GM12878 (cell line): ENCODE measurements at regions of chr14 and their contacts with region 1.

Region 1: DNA sequence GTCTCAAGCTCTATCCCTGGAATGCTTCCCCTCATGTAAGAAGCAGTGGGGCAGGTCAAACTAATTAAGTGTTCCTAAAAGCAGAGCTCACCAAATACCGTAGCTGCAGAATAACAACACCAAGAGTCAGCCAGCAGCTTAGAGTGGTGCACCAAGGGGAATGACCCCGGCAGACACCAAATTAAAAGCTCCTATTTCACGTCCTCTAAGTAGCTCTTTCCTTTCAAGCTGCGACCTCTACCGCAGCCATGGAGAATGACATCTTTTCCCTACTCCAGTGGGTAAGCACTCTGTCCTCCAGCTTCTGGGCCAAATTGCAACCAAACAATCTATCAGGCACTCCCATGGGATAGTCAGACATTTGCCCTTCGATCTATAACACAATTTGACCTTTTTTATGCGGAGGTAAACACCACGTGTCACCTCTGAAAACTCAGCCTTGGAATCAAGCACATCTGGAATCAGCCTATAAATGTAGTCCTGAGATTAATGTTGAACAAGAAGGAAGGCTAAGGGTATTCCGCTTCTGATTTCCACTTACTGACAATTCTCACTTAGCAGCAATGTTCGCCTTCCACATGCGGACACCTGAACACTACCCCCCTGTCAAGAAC is 67.6 kb upstream of the CDKN3 start:
- DNase-seq: no peak
- ATAC-seq: peak; percentile 86
- H3K4me3 ChIP-seq: no peak overlapping the region
- H3K27ac ChIP-seq: no peak overlapping the region
- H3K4me1 ChIP-seq: no peaks in the 10 kb centered on the region
- H3K27me3 ChIP-seq: no peaks in the 10 kb centered on the region; a peak in 1 of 4 replicates
- CTCF ChIP-seq: peak; percentile 75 to 86 (median 79)
- EP300 ChIP-seq: no peak
- POLR2A ChIP-seq: no peak
- RAD21 ChIP-seq: peak; percentile 87

Region 2: GRCh38 chr14:53432378-53432802 is 896.8 kb before region 1 on chr14:
- CTCF ChIA-PET with region 1: interaction called, 12 read pairs
- POLR2A ChIA-PET with region 1: no interaction called
- RAD21 ChIA-PET with region 1: interaction called, 4 read pairs
- SMC1A ChIA-PET with region 1: no interaction called
- in situ Hi-C with region 1: no loop called
- intact Hi-C with region 1: loop called (anchors 2 kb)
- DNase-seq: no peak
- ATAC-seq: peak; percentile 87
- H3K4me3 ChIP-seq: no peak overlapping the region
- H3K27ac ChIP-seq: no peak overlapping the region
- H3K4me1 ChIP-seq: no peaks in the 10 kb centered on the region
- H3K27me3 ChIP-seq: no peaks in the 10 kb centered on the region
- CTCF ChIP-seq: peak; percentile 63 to 70 (median 70)
- EP300 ChIP-seq: no peak
- POLR2A ChIP-seq: no peak
- RAD21 ChIP-seq: peak; percentile 87

Region 3: DNA sequence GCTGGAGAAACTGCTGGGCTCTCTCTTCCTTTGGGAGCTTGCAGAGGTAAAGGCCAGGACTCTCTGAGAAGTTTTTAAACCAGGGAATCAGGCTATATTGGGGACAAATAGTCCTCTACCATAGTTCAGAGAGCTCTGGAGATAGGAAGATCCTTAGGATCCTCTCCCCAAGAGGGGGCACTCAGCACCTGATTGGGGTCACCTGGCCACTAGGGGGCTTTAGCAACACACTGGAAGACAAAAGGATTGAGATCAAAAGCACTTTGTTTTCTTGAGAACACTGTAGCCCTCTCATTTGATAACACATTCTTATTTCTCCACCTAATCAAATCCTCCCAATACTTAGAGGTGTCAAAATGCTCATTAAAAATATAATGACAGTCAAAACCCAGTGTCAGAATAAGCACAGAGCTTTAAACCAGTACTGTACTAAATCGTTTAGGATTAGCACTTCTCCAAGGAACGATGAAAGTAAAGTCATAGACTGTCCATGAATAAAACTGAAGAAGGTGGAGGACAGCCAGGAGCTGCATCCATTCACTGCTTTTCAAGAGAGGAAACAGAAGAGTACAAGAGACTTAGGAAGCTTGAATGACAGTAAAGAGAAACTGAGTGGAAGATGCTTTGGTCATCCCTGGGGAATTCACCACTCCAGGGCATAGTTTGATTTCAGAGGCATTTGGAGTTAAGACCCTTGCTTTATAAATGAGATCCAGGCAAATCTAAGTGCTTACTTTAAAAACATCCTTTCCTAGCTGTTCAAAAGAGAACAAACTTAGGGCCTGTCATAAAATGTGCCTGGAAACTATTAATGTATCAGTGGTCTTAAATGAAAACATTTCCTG is 399.1 kb before region 1 on chr14:
- CTCF ChIA-PET with region 1: interaction called, 14 read pairs
- POLR2A ChIA-PET with region 1: no interaction called
- RAD21 ChIA-PET with region 1: interaction called, 5 read pairs
- SMC1A ChIA-PET with region 1: no interaction called
- in situ Hi-C with region 1: no loop called
- intact Hi-C with region 1: loop called (anchors 10 kb)
- DNase-seq: no peak
- ATAC-seq: peak; percentile 54; the same call in 2 of the 3 replicates
- H3K4me3 ChIP-seq: no peak overlapping the region
- H3K27ac ChIP-seq: no peak overlapping the region
- H3K4me1 ChIP-seq: no peaks in the 10 kb centered on the region
- H3K27me3 ChIP-seq: no peaks in the 10 kb centered on the region; a peak in 1 of 4 replicates
- CTCF ChIP-seq: peak; percentile 60 to 71 (median 68)
- EP300 ChIP-seq: no peak
- POLR2A ChIP-seq: no peak
- RAD21 ChIP-seq: peak; percentile 59

Region 4: GRCh38 chr14:53979747-53980642 is 349.2 kb before region 1 on chr14:
- CTCF ChIA-PET with region 1: no interaction called
- POLR2A ChIA-PET with region 1: no interaction called
- RAD21 ChIA-PET with region 1: no interaction called
- SMC1A ChIA-PET with region 1: no interaction called
- in situ Hi-C with region 1: no loop called
- intact Hi-C with region 1: no loop called
- DNase-seq: no peak
- ATAC-seq: no peak
- H3K4me3 ChIP-seq: no peak overlapping the region
- H3K27ac ChIP-seq: no peak overlapping the region
- H3K4me1 ChIP-seq: no peaks in the 10 kb centered on the region
- H3K27me3 ChIP-seq: no peaks in the 10 kb centered on the region
- CTCF ChIP-seq: no peak
- EP300 ChIP-seq: no peak
- POLR2A ChIP-seq: no peak
- RAD21 ChIP-seq: no peak

Region 5: GRCh38 chr14:54366736-54367735 is 37.8 kb after region 1 on chr14:
- CTCF ChIA-PET with region 1: interaction called, 3 read pairs
- POLR2A ChIA-PET with region 1: no interaction called
- RAD21 ChIA-PET with region 1: no interaction called
- SMC1A ChIA-PET with region 1: no interaction called
- in situ Hi-C with region 1: no loop called
- intact Hi-C with region 1: loop called (anchors 1 kb)
- DNase-seq: no peak
- ATAC-seq: peak; percentile 95
- H3K4me3 ChIP-seq: no peak overlapping the region
- H3K27ac ChIP-seq: no peak overlapping the region
- H3K4me1 ChIP-seq: no peaks in the 10 kb centered on the region
- H3K27me3 ChIP-seq: 0 out of 4 replicates have a peak, but pooled peaks cover 0 to 3% of the 10 kb centered on the region in 2 experiments
- CTCF ChIP-seq: peak; percentile 54 to 74 (median 58); a peak in 5 of 6 replicates
- EP300 ChIP-seq: no peak
- POLR2A ChIP-seq: no peak
- RAD21 ChIP-seq: peak; percentile 75

Region 6: DNA sequence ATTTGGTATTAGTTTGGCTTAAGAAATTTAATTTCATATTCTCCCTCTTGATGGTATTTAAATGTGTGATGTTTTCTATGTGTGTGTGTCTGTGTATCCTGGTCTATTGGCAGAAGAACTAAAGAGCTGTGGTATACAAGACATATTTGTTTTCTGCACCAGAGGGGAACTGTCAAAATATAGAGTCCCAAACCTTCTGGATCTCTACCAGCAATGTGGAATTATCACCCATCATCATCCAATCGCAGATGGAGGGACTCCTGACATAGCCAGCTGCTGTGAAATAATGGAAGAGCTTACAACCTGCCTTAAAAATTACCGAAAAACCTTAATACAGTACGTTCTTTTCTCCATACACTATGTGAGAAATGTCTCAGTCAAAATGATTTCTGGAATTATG is 82.2 kb after region 1 on chr14:
- CTCF ChIA-PET with region 1: no interaction called
- POLR2A ChIA-PET with region 1: no interaction called
- RAD21 ChIA-PET with region 1: no interaction called
- SMC1A ChIA-PET with region 1: no interaction called
- in situ Hi-C with region 1: no loop called
- intact Hi-C with region 1: no loop called
- DNase-seq: no peak
- ATAC-seq: no peak
- H3K4me3 ChIP-seq: no peak overlapping the region
- H3K27ac ChIP-seq: no peak overlapping the region
- H3K4me1 ChIP-seq: no peaks in the 10 kb centered on the region
- H3K27me3 ChIP-seq: no peaks in the 10 kb centered on the region
- CTCF ChIP-seq: no peak
- EP300 ChIP-seq: no peak
- POLR2A ChIP-seq: no peak
- RAD21 ChIP-seq: no peak

Region 7: GRCh38 chr14:54427871-54428270 is 98.7 kb after region 1 on chr14:
- CTCF ChIA-PET with region 1: no interaction called
- POLR2A ChIA-PET with region 1: no interaction called
- RAD21 ChIA-PET with region 1: no interaction called
- SMC1A ChIA-PET with region 1: no interaction called
- in situ Hi-C with region 1: no loop called
- intact Hi-C with region 1: no loop called
- DNase-seq: no peak
- ATAC-seq: no peak
- H3K4me3 ChIP-seq: no peak overlapping the region
- H3K27ac ChIP-seq: no peak overlapping the region
- H3K4me1 ChIP-seq: no peaks in the 10 kb centered on the region
- H3K27me3 ChIP-seq: no peaks in the 10 kb centered on the region
- CTCF ChIP-seq: no peak
- EP300 ChIP-seq: no peak
- POLR2A ChIP-seq: no peak
- RAD21 ChIP-seq: no peak